Activated CD4-positive, alpha-beta memory T cell treated with anti-CD3 and anti-CD28 coated beads for 36 hours (primary cell): ENCODE measurements at regions of chr1 and their contacts with region 1.

Region 1: GRCh38 chr1:231460614-231461013 is 38.5 kb upstream of the EGLN1 start:
- DNase-seq: peak; percentile 77
- H3K4me3 Mint-ChIP-seq: no peak overlapping the region
- H3K27ac Mint-ChIP-seq: peak overlapping the region; percentile 23
- H3K4me1 Mint-ChIP-seq: peaks cover 27% of the 10 kb centered on the region
- H3K27me3 Mint-ChIP-seq: peaks cover 61% of the 10 kb centered on the region

Region 2: DNA sequence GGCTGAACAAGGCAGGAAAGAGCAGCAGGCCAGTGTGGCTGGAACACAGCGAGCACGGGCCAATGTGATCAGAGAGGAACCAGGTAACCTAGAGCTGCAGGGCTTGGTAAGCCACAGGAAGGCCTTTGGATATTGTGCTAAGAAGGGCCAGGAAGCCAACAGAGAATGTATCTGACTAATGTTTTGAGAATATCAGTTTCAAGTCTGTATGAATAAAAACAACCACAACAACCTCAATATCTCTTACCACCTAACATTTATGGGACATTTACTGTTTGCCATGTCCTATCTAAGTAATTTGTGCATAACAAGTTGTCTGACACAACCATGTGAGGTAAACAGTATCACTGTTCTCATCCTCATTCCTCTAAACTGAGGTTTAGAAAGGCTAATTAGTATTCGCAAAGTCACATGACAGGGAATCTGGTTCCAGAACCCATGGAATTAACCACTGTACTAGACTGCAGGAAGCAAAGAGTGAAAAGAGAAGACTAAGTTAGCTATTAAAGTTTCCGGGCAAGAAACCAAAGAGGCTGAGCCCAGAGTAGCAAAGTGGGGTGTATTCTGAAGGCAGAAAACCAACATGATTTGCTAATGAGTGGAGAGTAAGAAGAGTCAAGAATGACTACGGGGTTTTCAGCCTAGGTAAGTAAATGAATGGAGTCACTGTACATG is 83.6 kb before region 1 on chr1:
- CTCF ChIA-PET with region 1: no interaction called
- POLR2A ChIA-PET with region 1: no interaction called
- intact Hi-C with region 1: loop called (anchors 10 kb)
- DNase-seq: peak; percentile 48
- H3K4me3 Mint-ChIP-seq: no peak overlapping the region
- H3K27ac Mint-ChIP-seq: peak overlapping the region; percentile 33
- H3K4me1 Mint-ChIP-seq: peaks cover 32% of the 10 kb centered on the region
- H3K27me3 Mint-ChIP-seq: no peaks in the 10 kb centered on the region

Region 3: GRCh38 chr1:231428377-231428776 is 32.2 kb before region 1 on chr1:
- CTCF ChIA-PET with region 1: no interaction called
- POLR2A ChIA-PET with region 1: no interaction called
- intact Hi-C with region 1: no loop called
- DNase-seq: no peak
- H3K4me3 Mint-ChIP-seq: no peak overlapping the region
- H3K27ac Mint-ChIP-seq: no peak overlapping the region
- H3K4me1 Mint-ChIP-seq: no peaks in the 10 kb centered on the region
- H3K27me3 Mint-ChIP-seq: peaks cover 11% of the 10 kb centered on the region

Region 4: GRCh38 chr1:231507476-231508355 is 47.1 kb after region 1 on chr1:
- CTCF ChIA-PET with region 1: no interaction called
- POLR2A ChIA-PET with region 1: no interaction called
- intact Hi-C with region 1: loop called (anchors 1 kb)
- DNase-seq: peak; percentile 31
- H3K4me3 Mint-ChIP-seq: no peak overlapping the region
- H3K27ac Mint-ChIP-seq: no peak overlapping the region
- H3K4me1 Mint-ChIP-seq: peaks cover 12% of the 10 kb centered on the region
- H3K27me3 Mint-ChIP-seq: peaks cover 15% of the 10 kb centered on the region

Region 5: GRCh38 chr1:231626535-231626945 is 165.9 kb after region 1 on chr1 and contains the start of gene DISC1:
- CTCF ChIA-PET with region 1: no interaction called
- POLR2A ChIA-PET with region 1: no interaction called
- intact Hi-C with region 1: loop called (anchors 1 kb)
- DNase-seq: peak; percentile 78
- H3K4me3 Mint-ChIP-seq: peak within 1 kb of the TSS; percentile 78
- H3K27ac Mint-ChIP-seq: peak within 1 kb of the TSS; percentile 50
- H3K4me1 Mint-ChIP-seq: peaks cover 29% of the 10 kb centered on the region
- H3K27me3 Mint-ChIP-seq: no peaks in the 10 kb centered on the region
- total RNA-seq, gene DISC1: 2.8 to 3.9 TPM